Activated CD8-positive, alpha-beta memory T cell treated with anti-CD3 and anti-CD28 coated beads, Interleukin-2, amount 10 ng/mL, durations not matched to agents 7 days and 5 days (primary cell): ENCODE measurements at regions of chr16 and their contacts with region 1.

Region 1: GRCh38 chr16:81841722-81842121 is 62.6 kb downstream of the PLCG2 start:
- DNase-seq: peak; percentile 77
- ATAC-seq: peak; percentile 76
- H3K4me3 Mint-ChIP-seq: peak overlapping the region; percentile 70
- H3K27ac Mint-ChIP-seq: peak overlapping the region; percentile 85
- H3K4me1 Mint-ChIP-seq: peaks cover 73% of the 10 kb centered on the region
- H3K27me3 Mint-ChIP-seq: no peaks in the 10 kb centered on the region

Region 2: DNA sequence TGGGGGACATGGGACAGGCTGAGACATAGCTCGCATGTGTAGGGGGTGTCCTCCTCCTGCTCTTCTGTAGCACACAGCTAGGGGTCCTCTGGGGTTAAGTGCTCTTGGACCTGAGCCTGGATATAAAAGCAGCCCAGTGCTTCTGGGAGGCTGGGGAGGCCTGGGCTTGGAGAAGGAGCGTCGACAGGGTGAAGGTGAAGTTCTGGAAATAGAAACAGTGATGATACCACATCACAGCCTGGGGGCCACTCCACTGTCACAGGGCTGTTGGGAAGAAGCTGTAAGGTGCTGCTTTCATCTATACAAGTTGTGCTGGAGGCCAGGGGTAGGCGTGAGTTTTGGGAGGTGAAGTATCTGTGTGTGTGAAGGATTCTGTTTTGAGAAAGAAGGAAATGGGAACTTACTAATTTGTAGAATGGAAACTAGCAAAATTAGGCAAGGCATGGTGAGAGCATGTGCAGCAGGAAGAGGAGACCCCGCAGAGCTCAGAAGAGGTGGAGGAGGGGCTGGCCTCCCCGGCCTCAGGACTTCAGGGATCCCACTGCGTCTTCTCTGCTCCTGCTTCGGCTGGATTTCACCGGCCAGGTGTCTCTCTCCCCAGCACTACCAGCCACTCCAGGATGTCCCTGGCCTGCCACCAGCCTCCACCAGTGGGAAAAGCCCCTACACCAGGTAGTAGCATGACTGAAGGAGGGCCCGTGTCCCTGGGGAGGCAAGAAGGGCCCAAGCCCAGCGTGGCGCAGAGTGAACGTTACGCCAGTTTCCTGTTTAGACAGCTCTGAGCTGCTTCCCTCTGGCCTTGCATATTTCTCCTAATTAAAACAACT is 43.2 kb before region 1 on chr16:
- CTCF ChIA-PET with region 1: interaction called, 10 read pairs
- DNase-seq: peak; percentile 75
- ATAC-seq: peak; percentile 73
- H3K4me3 Mint-ChIP-seq: peak overlapping the region; percentile 66
- H3K27ac Mint-ChIP-seq: peak overlapping the region; percentile 96
- H3K4me1 Mint-ChIP-seq: peaks cover 51% of the 10 kb centered on the region
- H3K27me3 Mint-ChIP-seq: no peaks in the 10 kb centered on the region